ENCODE measurements at regions of chr6 and their contacts with region 1.

Region 1: GRCh38 chr6:10991115-10991514 is 53.0 kb downstream of the ELOVL2 start:
- DNase-seq: no peak
- ATAC-seq: no peak
- H3K4me3 ChIP-seq: no peak overlapping the region
- H3K27ac ChIP-seq: no peak overlapping the region
- H3K4me1 ChIP-seq: no peaks in the 10 kb centered on the region
- H3K27me3 ChIP-seq: no peaks in the 10 kb centered on the region
- CTCF ChIP-seq: no peak
- EP300 ChIP-seq: no peak
- POLR2A ChIP-seq: no peak
- RAD21 ChIP-seq: no peak

Region 2: GRCh38 chr6:10837995-10838793 is 152.9 kb before region 1 on chr6 and contains the start of gene MAK:
- CTCF ChIA-PET with region 1: no interaction called
- POLR2A ChIA-PET with region 1: no interaction called
- RAD21 ChIA-PET with region 1: no interaction called
- SMC1A ChIA-PET with region 1: no interaction called
- in situ Hi-C with region 1: no loop called
- intact Hi-C with region 1: no loop called
- DNase-seq: peak; percentile 47
- ATAC-seq: peak; percentile 89
- H3K4me3 ChIP-seq: peak within 1 kb of the TSS; percentile 60
- H3K27ac ChIP-seq: peak within 1 kb of the TSS; percentile 66
- H3K4me1 ChIP-seq: peaks cover 8% of the 10 kb centered on the region; the same call in 1 of the 2 replicates
- H3K27me3 ChIP-seq: no peaks in the 10 kb centered on the region
- CTCF ChIP-seq: no peak
- EP300 ChIP-seq: no peak; a peak in 1 of 4 replicates
- POLR2A ChIP-seq: peak; percentile 23; the same call in 1 of the 2 replicates
- RAD21 ChIP-seq: no peak
- polyA plus RNA-seq, gene MAK: 0.13 to 0.32 TPM

Region 3: GRCh38 chr6:11039040-11039439 is 47.9 kb after region 1 on chr6:
- CTCF ChIA-PET with region 1: no interaction called
- POLR2A ChIA-PET with region 1: no interaction called
- RAD21 ChIA-PET with region 1: no interaction called
- SMC1A ChIA-PET with region 1: interaction called, 3 read pairs
- in situ Hi-C with region 1: no loop called
- intact Hi-C with region 1: loop called (anchors 5 kb)
- DNase-seq: no peak
- ATAC-seq: no peak
- H3K4me3 ChIP-seq: no peak overlapping the region
- H3K27ac ChIP-seq: no peak overlapping the region
- H3K4me1 ChIP-seq: 0 out of 2 replicates have a peak, but pooled peaks cover 4% of the 10 kb centered on the region
- H3K27me3 ChIP-seq: peaks cover 8 to 16% of the 10 kb centered on the region in 2 experiments
- CTCF ChIP-seq: no peak
- EP300 ChIP-seq: no peak
- POLR2A ChIP-seq: no peak
- RAD21 ChIP-seq: no peak

Region 4: GRCh38 chr6:11585426-11586016 is 594.4 kb after region 1 on chr6:
- CTCF ChIA-PET with region 1: no interaction called
- POLR2A ChIA-PET with region 1: no interaction called
- RAD21 ChIA-PET with region 1: no interaction called
- SMC1A ChIA-PET with region 1: no interaction called
- in situ Hi-C with region 1: no loop called
- intact Hi-C with region 1: no loop called
- DNase-seq: peak; percentile 32
- ATAC-seq: peak; percentile 70
- H3K4me3 ChIP-seq: no peak overlapping the region
- H3K27ac ChIP-seq: no peak overlapping the region
- H3K4me1 ChIP-seq: no peaks in the 10 kb centered on the region
- H3K27me3 ChIP-seq: no peaks in the 10 kb centered on the region
- CTCF ChIP-seq: peak; percentile 45 to 67 (median 59); a peak in 5 of 6 replicates
- EP300 ChIP-seq: no peak
- POLR2A ChIP-seq: no peak
- RAD21 ChIP-seq: peak; percentile 77